PC-9 (cell line): ENCODE measurements at regions of chr1 and their contacts with region 1.

Region 1: GRCh38 chr1:112955781-112956543 is at the start of gene SLC16A1:
- DNase-seq: peak; percentile 81 to 92
- H3K4me3 ChIP-seq: peak within 1 kb of the TSS; percentile 82
- H3K27ac ChIP-seq: peak within 1 kb of the TSS; percentile 73
- H3K4me1 ChIP-seq: peaks cover 36% of the 10 kb centered on the region
- H3K27me3 ChIP-seq: no peaks in the 10 kb centered on the region
- CTCF ChIP-seq: peak; percentile 31
- total RNA-seq, gene SLC16A1: 52.9 and 74.6 TPM in 2 replicates

Region 2: GRCh38 chr1:112735752-112736151 is 220.2 kb before region 1 on chr1:
- CTCF ChIA-PET with region 1: no interaction called
- POLR2A ChIA-PET with region 1: interaction called, 10 read pairs
- intact Hi-C with region 1: no loop called
- DNase-seq: peak; percentile 18 to 90
- H3K4me3 ChIP-seq: no peak overlapping the region
- H3K27ac ChIP-seq: peak overlapping the region; percentile 36
- H3K4me1 ChIP-seq: peaks cover 12% of the 10 kb centered on the region; the same call in 1 of the 2 replicates
- H3K27me3 ChIP-seq: no peaks in the 10 kb centered on the region
- CTCF ChIP-seq: no peak

Region 3: GRCh38 chr1:112803906-112804762 is 151.8 kb before region 1 on chr1:
- CTCF ChIA-PET with region 1: no interaction called
- POLR2A ChIA-PET with region 1: no interaction called
- intact Hi-C with region 1: loop called (anchors 10 kb)
- DNase-seq: peak; percentile 68 to 78
- H3K4me3 ChIP-seq: no peak overlapping the region
- H3K27ac ChIP-seq: no peak overlapping the region
- H3K4me1 ChIP-seq: peaks cover 21% of the 10 kb centered on the region
- H3K27me3 ChIP-seq: no peaks in the 10 kb centered on the region
- CTCF ChIP-seq: peak; percentile 96

Region 4: DNA sequence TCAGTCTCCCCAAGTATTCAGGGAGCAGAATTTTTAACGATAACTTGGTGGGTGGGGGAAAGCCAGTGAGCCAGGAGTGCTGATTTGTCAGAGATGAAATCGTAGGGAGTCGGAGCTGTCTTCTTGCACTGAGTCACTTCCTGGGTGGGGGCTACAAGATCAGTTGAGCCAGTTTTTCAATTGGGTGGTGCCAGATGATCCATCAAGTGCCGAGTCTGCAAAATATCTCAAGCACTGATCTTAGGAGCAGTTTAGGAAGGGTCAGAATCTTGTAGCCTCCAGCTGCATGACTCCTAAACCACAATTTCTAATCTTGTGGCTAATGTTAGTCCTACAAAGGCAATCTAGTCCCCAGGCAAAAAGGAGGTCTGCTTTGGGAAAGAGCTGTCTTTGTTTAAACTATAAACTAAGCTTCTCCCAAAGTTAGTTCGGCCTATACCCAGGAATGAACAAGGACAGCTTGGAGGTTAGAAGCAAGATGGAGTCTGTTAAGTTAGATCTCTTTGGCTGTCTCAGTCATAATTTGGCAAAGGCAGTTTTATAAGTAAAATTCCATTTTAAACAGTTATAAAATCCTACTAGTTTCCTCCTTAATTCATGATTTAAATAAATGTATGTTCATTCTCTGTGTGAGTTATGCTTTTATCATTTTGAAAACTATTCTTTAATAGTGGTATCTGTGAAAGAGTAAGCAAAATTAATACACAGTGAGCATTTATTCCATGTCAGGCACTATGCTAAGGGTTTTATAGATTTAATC is 51.7 kb before region 1 on chr1:
- CTCF ChIA-PET with region 1: no interaction called
- POLR2A ChIA-PET with region 1: interaction called, 11 read pairs
- intact Hi-C with region 1: loop called (anchors 2 kb)
- DNase-seq: peak; percentile 72 to 99
- H3K4me3 ChIP-seq: peak overlapping the region; percentile 33; the same call in 1 of the 2 replicates
- H3K27ac ChIP-seq: peak overlapping the region; percentile 84
- H3K4me1 ChIP-seq: peaks cover 65% of the 10 kb centered on the region
- H3K27me3 ChIP-seq: no peaks in the 10 kb centered on the region
- CTCF ChIP-seq: no peak

Region 5: DNA sequence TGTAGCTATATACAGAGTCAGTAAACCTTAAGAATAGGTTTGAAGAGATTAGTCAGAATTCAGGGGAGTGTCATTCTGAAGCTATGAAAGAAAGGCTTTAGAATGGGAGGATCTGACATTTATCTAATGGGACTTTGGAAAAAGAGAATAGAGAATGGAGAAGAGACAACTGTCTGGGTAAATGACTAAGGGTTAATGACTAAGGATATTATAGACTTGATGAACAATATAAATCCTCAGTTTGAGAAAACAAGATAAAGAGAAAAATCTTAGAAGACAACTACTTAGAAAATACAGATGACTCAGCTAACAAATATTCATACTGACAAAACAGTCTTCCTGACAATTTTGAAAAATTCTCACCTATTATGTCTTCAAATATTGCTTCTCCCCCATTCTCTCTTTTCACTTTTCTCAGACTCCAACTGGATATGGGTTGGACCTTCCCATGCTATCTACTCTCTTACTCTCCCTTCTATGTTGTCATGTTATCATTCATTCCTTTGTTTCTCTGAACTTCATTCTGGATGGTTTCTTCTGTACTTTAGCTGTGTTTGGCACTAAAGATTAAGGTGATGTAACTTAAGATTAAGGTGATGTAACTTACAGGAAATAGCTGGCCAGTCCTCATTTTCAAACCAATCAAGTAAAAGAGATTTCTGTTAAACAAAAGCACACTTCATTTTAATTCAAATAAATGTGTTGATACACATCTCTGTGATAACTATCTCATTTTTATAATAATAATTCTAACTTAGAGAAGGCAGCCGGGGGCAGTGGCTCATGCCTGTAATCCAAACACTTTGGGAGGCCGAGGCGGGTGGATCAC is 20.3 kb before region 1 on chr1:
- CTCF ChIA-PET with region 1: no interaction called
- POLR2A ChIA-PET with region 1: no interaction called
- intact Hi-C with region 1: loop called (anchors 2 kb)
- DNase-seq: peak in 1 of 2 experiments; percentile 56
- H3K4me3 ChIP-seq: peak overlapping the region; percentile 20; the same call in 1 of the 2 replicates
- H3K27ac ChIP-seq: peak overlapping the region; percentile 93
- H3K4me1 ChIP-seq: peaks cover 39% of the 10 kb centered on the region
- H3K27me3 ChIP-seq: no peaks in the 10 kb centered on the region
- CTCF ChIP-seq: no peak

Region 6: DNA sequence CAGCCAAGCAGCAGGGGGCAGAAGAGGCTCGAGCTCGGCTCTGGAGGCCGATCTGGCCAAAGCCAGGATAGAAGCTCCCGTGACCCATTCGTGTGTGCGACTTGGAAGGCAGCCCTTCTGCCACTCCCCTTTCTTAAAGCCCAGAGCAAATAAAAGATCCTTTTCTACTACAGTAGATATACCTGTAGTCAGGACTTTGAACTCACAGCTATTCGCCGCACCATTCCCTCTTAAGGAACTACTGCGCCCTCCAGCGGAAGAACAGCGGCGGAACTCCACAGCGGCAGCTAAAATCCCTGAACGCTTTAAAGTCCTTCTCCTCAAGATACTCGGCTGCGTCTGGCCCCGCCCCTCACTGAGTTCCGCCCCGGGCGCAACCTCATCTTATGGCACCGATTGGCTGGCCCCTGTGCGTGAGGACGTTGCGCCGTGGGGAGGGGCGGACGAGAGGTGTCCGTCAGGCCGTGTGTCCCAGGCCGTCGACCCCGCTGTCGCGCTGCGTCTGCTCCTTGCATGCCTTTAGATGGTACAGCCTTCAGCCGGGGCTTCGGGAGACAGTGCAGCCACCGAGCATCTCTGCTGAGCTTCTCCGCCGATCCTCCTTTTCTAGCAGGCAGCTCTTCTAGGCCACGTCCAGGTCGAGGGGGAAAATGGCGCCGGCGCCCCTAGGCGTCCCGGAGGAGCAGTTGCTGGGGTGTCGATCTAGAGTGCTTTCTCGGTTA is 117.0 kb after region 1 on chr1 and contains the start of gene LRIG2:
- CTCF ChIA-PET with region 1: interaction called, 9 read pairs
- POLR2A ChIA-PET with region 1: no interaction called
- intact Hi-C with region 1: loop called (anchors 2 kb)
- DNase-seq: peak; percentile 99
- H3K4me3 ChIP-seq: peak within 1 kb of the TSS; percentile 85
- H3K27ac ChIP-seq: peak within 1 kb of the TSS; percentile 78
- H3K4me1 ChIP-seq: peaks cover 20% of the 10 kb centered on the region
- H3K27me3 ChIP-seq: no peaks in the 10 kb centered on the region
- CTCF ChIP-seq: peak; percentile 94
- total RNA-seq, gene LRIG2: 9.4 and 10.6 TPM in 2 replicates

Region 7: GRCh38 chr1:113567427-113567826 is 611.5 kb after region 1 on chr1:
- CTCF ChIA-PET with region 1: no interaction called
- POLR2A ChIA-PET with region 1: no interaction called
- intact Hi-C with region 1: no loop called
- DNase-seq: no peak
- H3K4me3 ChIP-seq: no peak overlapping the region
- H3K27ac ChIP-seq: no peak overlapping the region
- H3K4me1 ChIP-seq: no peaks in the 10 kb centered on the region
- H3K27me3 ChIP-seq: no peaks in the 10 kb centered on the region
- CTCF ChIP-seq: no peak